CD4-positive, alpha-beta memory T cell (primary cell): ENCODE measurements at regions of chr2 and their contacts with region 1.

Region 1: GRCh38 chr2:218301176-218301819 is 9.0 kb upstream of the TMBIM1 start:
- DNase-seq: peak; percentile 83 to 87 (median 84)
- H3K4me3 ChIP-seq: no peak overlapping the region
- H3K4me3 Mint-ChIP-seq: no peak overlapping the region
- H3K27ac ChIP-seq: no peak overlapping the region
- H3K27ac Mint-ChIP-seq: peak overlapping the region; percentile 7 to 91 (median 39)
- H3K4me1 ChIP-seq: peaks cover 8% of the 10 kb centered on the region
- H3K4me1 Mint-ChIP-seq: peaks cover 3 to 8% (median 5%) of the 10 kb centered on the region in 4 donors
- H3K27me3 ChIP-seq: no peaks in the 10 kb centered on the region
- H3K27me3 Mint-ChIP-seq: no peaks in the 10 kb centered on the region

Region 2: DNA sequence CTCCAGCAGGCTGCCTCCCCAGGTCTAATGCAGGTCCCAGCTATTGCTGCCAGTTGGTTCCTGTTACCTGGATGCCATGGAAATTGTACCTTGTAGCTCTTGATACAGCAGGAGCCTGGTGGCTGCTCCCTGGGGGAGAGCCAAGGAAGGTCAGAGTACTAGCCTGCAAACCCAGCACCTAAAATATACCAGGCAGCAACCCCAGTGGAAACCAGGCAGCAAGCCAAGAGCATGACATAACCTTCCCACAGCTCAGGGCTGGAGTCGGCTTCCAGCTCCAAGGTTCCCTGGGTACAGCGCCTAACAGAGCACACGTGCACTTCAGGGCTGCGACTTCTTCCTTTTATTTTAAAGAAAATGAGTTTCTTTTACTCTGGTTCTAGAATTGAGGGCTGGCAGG is 1471.8 kb before region 1 on chr2:
- CTCF ChIA-PET with region 1: no interaction called
- POLR2A ChIA-PET with region 1: no interaction called
- intact Hi-C with region 1: no loop called
- DNase-seq: no peak
- H3K4me3 ChIP-seq: no peak overlapping the region
- H3K4me3 Mint-ChIP-seq: no peak overlapping the region
- H3K27ac ChIP-seq: no peak overlapping the region
- H3K27ac Mint-ChIP-seq: no peak overlapping the region
- H3K4me1 ChIP-seq: no peaks in the 10 kb centered on the region
- H3K4me1 Mint-ChIP-seq: no peaks in the 10 kb centered on the region
- H3K27me3 ChIP-seq: no peaks in the 10 kb centered on the region
- H3K27me3 Mint-ChIP-seq: peaks cover 4 to 7% of the 10 kb centered on the region in 2 donors

Region 3: GRCh38 chr2:217555081-217555876 is 746.0 kb before region 1 on chr2:
- CTCF ChIA-PET with region 1: no interaction called
- POLR2A ChIA-PET with region 1: no interaction called
- intact Hi-C with region 1: no loop called
- DNase-seq: no peak
- H3K4me3 ChIP-seq: no peak overlapping the region
- H3K4me3 Mint-ChIP-seq: no peak overlapping the region
- H3K27ac ChIP-seq: no peak overlapping the region
- H3K27ac Mint-ChIP-seq: no peak overlapping the region
- H3K4me1 ChIP-seq: no peaks in the 10 kb centered on the region
- H3K4me1 Mint-ChIP-seq: peaks cover 0 to 2% (median under 1%) of the 10 kb centered on the region in 4 donors
- H3K27me3 ChIP-seq: no peaks in the 10 kb centered on the region
- H3K27me3 Mint-ChIP-seq: no peaks in the 10 kb centered on the region

Region 4: GRCh38 chr2:218276986-218277755 is 24.1 kb before region 1 on chr2:
- CTCF ChIA-PET with region 1: interaction called, 446 read pairs
- POLR2A ChIA-PET with region 1: interaction called, 176 read pairs
- intact Hi-C with region 1: loop called (anchors 1 kb)
- DNase-seq: no peak
- H3K4me3 ChIP-seq: no peak overlapping the region
- H3K4me3 Mint-ChIP-seq: no peak overlapping the region
- H3K27ac ChIP-seq: peak overlapping the region; percentile 11
- H3K27ac Mint-ChIP-seq: peak overlapping the region; percentile 59 to 82 (median 68)
- H3K4me1 ChIP-seq: peaks cover 13% of the 10 kb centered on the region
- H3K4me1 Mint-ChIP-seq: peaks cover 11 to 31% (median 20%) of the 10 kb centered on the region in 4 donors
- H3K27me3 ChIP-seq: no peaks in the 10 kb centered on the region
- H3K27me3 Mint-ChIP-seq: no peaks in the 10 kb centered on the region

Region 5: GRCh38 chr2:218319813-218320365 is 18.6 kb after region 1 on chr2:
- CTCF ChIA-PET with region 1: interaction called, 13 read pairs
- POLR2A ChIA-PET with region 1: interaction called, 7 read pairs
- intact Hi-C with region 1: loop called (anchors 1 kb)
- DNase-seq: no peak
- H3K4me3 ChIP-seq: no peak overlapping the region
- H3K4me3 Mint-ChIP-seq: peak overlapping the region in 1 of 8 donors; percentile 46
- H3K27ac ChIP-seq: no peak overlapping the region
- H3K27ac Mint-ChIP-seq: peak overlapping the region in 2 of 7 donors; percentile 8 to 80
- H3K4me1 ChIP-seq: peaks cover 48% of the 10 kb centered on the region
- H3K4me1 Mint-ChIP-seq: peaks cover 33 to 69% (median 50%) of the 10 kb centered on the region in 4 donors
- H3K27me3 ChIP-seq: no peaks in the 10 kb centered on the region
- H3K27me3 Mint-ChIP-seq: no peaks in the 10 kb centered on the region

Region 6: DNA sequence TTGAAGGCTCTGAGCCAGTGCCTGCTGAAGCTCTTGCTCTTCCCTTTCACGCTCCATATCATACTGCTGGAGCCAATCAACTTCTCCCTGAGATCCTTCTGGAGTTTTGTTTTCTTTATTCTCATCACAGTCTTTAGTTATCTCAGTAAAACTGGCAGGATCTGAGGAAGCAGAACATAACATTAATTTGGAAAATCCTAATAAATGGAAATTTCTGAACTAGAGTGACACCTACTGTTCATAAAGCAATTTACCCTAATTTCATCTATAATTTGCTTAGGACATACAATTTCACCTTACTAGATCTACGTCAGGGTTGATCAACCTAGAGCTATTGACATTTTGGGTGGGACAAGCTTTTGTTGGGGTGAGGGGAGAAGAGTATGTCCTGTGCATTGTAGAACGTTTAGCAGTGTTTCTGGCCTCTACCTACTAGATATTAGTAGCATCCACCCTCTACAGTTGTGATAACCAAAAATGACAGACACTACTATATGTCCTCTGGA is 164.8 kb after region 1 on chr2:
- CTCF ChIA-PET with region 1: interaction called, 11 read pairs
- POLR2A ChIA-PET with region 1: no interaction called
- intact Hi-C with region 1: loop called (anchors 1 kb)
- DNase-seq: peak in 4 of 5 donors; percentile 11 to 15 (median 14)
- H3K4me3 ChIP-seq: no peak overlapping the region
- H3K4me3 Mint-ChIP-seq: no peak overlapping the region
- H3K27ac ChIP-seq: no peak overlapping the region
- H3K27ac Mint-ChIP-seq: peak overlapping the region in 6 of 7 donors; percentile 20 to 78 (median 47)
- H3K4me1 ChIP-seq: peaks cover 7% of the 10 kb centered on the region
- H3K4me1 Mint-ChIP-seq: peaks cover 6 to 12% (median 8%) of the 10 kb centered on the region in 4 donors
- H3K27me3 ChIP-seq: no peaks in the 10 kb centered on the region
- H3K27me3 Mint-ChIP-seq: no peaks in the 10 kb centered on the region

Region 7: DNA sequence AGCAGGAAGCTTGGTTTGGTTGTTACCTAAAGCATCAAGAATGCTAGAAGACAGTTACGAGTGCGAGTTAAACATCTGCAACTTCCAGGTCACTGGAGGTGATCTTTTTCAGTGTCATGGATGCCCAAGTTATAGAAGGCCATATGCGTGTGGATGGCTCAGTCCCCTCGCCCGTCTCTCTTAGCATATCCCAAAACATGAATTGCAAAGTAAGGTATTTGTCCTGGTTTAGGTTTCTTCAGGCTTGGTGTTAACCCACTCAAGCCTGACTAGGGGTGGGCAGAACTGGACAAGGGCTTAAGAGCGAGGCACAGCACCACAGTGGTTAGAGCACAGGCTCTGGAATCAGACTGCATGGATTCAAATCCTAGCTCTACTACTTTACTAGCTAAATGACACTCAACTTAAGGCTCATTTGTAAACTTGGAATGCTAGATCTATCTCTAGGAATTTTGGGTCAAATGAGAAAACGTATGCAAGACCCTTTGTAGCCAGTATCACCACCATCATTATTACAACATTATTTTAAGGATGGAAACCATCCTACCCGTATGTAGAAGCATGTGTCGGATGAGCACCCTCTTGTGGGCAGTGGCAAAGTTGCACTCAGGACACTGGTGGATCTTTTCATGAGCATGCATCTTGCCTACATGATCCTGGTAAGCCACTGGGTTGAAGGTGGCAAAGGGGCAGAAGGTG is 346.9 kb after region 1 on chr2:
- CTCF ChIA-PET with region 1: no interaction called
- POLR2A ChIA-PET with region 1: no interaction called
- intact Hi-C with region 1: loop called (anchors 1 kb)
- DNase-seq: peak in 4 of 5 donors; percentile 42 to 52 (median 48)
- H3K4me3 ChIP-seq: no peak overlapping the region
- H3K4me3 Mint-ChIP-seq: no peak overlapping the region
- H3K27ac ChIP-seq: no peak overlapping the region
- H3K27ac Mint-ChIP-seq: peak overlapping the region in 2 of 7 donors; percentile 54 to 67
- H3K4me1 ChIP-seq: peaks cover 6% of the 10 kb centered on the region
- H3K4me1 Mint-ChIP-seq: peaks cover 6 to 13% (median 11%) of the 10 kb centered on the region in 4 donors
- H3K27me3 ChIP-seq: no peaks in the 10 kb centered on the region
- H3K27me3 Mint-ChIP-seq: no peaks in the 10 kb centered on the region